ENCODE measurements at regions of chr2 and their contacts with region 1.

Region 1: DNA sequence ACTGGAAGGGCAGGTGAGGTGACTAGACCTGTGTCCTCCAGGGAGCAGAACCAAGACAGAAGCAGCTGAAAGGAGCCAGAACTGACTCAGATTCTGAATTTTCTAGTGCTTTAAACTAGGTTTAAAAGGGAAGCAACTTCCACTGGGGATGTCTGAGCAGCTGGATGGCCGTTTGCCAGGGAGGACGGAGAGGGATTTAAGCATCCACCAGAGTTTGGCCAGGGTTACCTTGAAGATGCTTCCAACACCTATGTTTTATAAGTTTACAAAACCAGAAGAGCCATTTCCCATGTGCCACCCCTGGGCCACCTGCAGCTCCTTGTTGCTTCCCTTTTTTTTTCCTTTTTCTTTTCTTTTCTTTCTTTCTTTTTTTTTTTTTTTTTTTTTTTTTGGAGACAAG is 48.6 kb upstream of the RBM44 start:
- DNase-seq: no peak
- ATAC-seq: no peak
- H3K4me3 ChIP-seq: no peak overlapping the region
- H3K27ac ChIP-seq: no peak overlapping the region
- H3K4me1 ChIP-seq: no peaks in the 10 kb centered on the region
- H3K27me3 ChIP-seq: no peaks in the 10 kb centered on the region
- CTCF ChIP-seq: no peak

Region 2: DNA sequence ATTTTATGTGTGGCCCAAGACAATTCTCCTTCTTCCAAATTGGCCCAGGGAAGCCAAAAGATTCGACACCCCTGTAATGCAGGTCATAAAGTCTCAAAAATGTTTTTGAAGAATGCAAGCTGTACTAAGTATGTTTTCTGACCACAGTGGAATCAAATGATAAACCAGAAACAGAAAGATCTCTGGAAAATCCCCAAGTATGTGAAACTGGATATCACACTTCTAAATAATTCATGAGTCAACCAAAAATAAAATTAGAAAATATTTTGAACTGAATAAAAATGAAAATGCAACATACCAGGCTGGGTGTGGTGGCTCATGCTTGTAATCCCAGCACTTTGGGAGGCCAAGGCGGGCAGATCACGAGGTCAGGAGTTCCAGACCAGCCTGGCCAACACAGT is 182.8 kb after region 1 on chr2:
- CTCF ChIA-PET with region 1: interaction called, 10 read pairs
- POLR2A ChIA-PET with region 1: no interaction called
- in situ Hi-C with region 1: no loop called
- intact Hi-C with region 1: no loop called
- DNase-seq: no peak
- ATAC-seq: no peak
- H3K4me3 ChIP-seq: no peak overlapping the region
- H3K27ac ChIP-seq: no peak overlapping the region
- H3K4me1 ChIP-seq: no peaks in the 10 kb centered on the region
- H3K27me3 ChIP-seq: no peaks in the 10 kb centered on the region
- CTCF ChIP-seq: no peak